ENCODE measurements at regions of chr17 and their contacts with region 1.

Region 1: GRCh38 chr17:164303-165235 is 16.9 kb downstream of the DOC2B start:
- DNase-seq: peak; percentile 65 to 80 (median 74)
- H3K4me3 ChIP-seq: no peak overlapping the region
- H3K27ac ChIP-seq: no peak overlapping the region
- H3K4me1 ChIP-seq: no peaks in the 10 kb centered on the region
- H3K27me3 ChIP-seq: no peaks in the 10 kb centered on the region

Region 2: GRCh38 chr17:147796-148740 is 16.5 kb before region 1 on chr17:
- CTCF ChIA-PET with region 1: interaction called, 10 read pairs
- POLR2A ChIA-PET with region 1: no interaction called
- DNase-seq: no peak
- H3K4me3 ChIP-seq: no peak overlapping the region
- H3K27ac ChIP-seq: no peak overlapping the region
- H3K4me1 ChIP-seq: peaks cover 0 to 2% (median under 1%) of the 10 kb centered on the region in 4 experiments
- H3K27me3 ChIP-seq: peaks cover 0 to 6% (median 4%) of the 10 kb centered on the region in 5 experiments

Region 3: GRCh38 chr17:309361-309888 is 144.9 kb after region 1 on chr17:
- CTCF ChIA-PET with region 1: interaction called, 34 read pairs
- POLR2A ChIA-PET with region 1: no interaction called
- DNase-seq: peak; percentile 91 to 94 (median 92)
- H3K4me3 ChIP-seq: no peak overlapping the region
- H3K27ac ChIP-seq: no peak overlapping the region
- H3K4me1 ChIP-seq: peaks cover 0 to 22% (median 6%) of the 10 kb centered on the region in 4 experiments
- H3K27me3 ChIP-seq: no peaks in the 10 kb centered on the region

Region 4: DNA sequence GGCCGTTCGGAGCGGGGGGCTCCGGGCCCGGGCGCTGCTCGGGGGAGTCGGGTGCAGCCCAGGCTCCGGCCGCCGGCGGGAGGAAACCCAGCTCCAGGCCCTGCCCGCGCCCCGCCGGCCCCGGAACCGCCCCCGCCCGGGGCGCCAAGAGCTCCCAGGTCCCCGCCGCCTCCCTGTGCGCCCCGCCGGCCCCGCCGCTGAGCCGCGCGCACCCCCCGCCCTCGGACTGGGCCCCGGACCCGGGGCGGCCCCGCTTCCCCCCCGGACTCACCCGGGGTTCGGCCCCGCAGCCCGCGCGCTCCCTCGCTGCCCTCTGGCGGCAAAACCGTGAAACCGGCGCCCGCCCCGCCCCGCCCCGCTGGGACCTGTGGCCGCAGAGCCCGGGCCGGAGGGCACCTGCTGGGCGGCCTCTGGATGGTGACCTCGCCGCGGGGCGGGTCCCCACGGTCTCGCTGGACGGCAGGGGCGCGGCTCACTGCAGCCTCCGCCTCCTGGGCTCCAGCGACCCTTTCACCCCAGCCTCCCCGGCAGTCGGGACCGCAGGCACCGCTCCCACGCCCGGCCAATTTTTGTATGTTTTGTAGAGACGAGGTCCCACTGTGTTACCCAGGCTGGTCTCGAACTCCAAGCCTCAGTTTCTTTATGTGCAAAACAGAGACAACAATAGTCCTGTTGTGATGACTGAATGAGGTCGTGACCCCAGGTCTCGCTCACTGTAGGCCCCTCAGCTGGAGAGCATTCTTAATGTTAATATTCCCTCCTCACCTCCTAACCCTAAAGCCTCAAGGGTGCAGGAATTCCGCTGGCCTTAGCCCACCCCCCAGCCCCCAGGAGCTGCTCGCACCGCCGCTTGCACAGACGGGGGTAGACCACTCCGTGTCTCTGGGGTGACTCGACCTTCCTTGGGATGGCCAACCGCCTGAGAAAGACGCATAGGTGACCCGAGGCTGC is 221.6 kb after region 1 on chr17:
- CTCF ChIA-PET with region 1: interaction called, 10 read pairs
- POLR2A ChIA-PET with region 1: no interaction called
- DNase-seq: peak in 2 of 3 donors; percentile 42 to 56
- H3K4me3 ChIP-seq: peak overlapping the region in 6 of 7 experiments; percentile 8 to 64 (median 52)
- H3K27ac ChIP-seq: no peak overlapping the region
- H3K4me1 ChIP-seq: peaks cover 0 to 15% (median 13%) of the 10 kb centered on the region in 4 experiments
- H3K27me3 ChIP-seq: peaks cover 0 to 24% (median 18%) of the 10 kb centered on the region in 5 experiments

Region 5: GRCh38 chr17:700504-701094 is 536.0 kb after region 1 on chr17:
- CTCF ChIA-PET with region 1: interaction called, 15 read pairs
- POLR2A ChIA-PET with region 1: no interaction called
- DNase-seq: peak; percentile 38 to 75 (median 67)
- H3K4me3 ChIP-seq: no peak overlapping the region
- H3K27ac ChIP-seq: no peak overlapping the region
- H3K4me1 ChIP-seq: no peaks in the 10 kb centered on the region
- H3K27me3 ChIP-seq: no peaks in the 10 kb centered on the region